Prostate gland (tissue), 2 donors: ENCODE measurements at regions of chr1 and their contacts with region 1.

Region 1: GRCh38 chr1:205354259-205354904 is 2.3 kb downstream of the KLHDC8A start:
- DNase-seq: peak; percentile 60
- H3K4me3 ChIP-seq: no peak overlapping the region
- H3K27ac ChIP-seq: no peak overlapping the region
- H3K4me1 ChIP-seq: no peaks in the 10 kb centered on the region
- H3K27me3 ChIP-seq: no peaks in the 10 kb centered on the region
- CTCF ChIP-seq: peak; percentile 61 to 76 (median 70)
- POLR2A ChIP-seq: no peak

Region 2: DNA sequence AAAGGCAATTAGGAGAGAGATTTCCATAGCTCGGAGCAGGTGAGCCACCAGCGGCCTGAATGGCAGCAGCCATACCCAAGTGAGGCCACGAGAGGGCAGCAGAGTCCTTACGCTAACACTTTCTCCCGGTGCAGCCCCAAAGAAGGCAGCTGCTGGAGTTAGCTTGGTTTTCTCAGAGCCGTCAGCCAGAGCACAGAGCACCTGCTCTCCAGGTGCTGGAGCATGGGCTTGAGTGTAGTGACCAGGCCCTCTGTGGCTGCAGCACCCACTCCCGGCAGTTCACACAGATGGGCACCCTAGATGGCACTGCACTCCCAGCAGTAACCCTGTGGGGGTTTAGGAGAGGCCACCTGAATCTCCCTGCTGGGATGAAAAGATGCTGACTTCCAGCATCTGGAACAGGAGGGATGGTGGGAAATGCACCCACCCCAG is 80.8 kb before region 1 on chr1:
- intact Hi-C with region 1: no loop called
- DNase-seq: peak; percentile 87
- H3K4me3 ChIP-seq: no peak overlapping the region
- H3K27ac ChIP-seq: no peak overlapping the region
- H3K4me1 ChIP-seq: no peaks in the 10 kb centered on the region
- H3K27me3 ChIP-seq: no peaks in the 10 kb centered on the region
- CTCF ChIP-seq: peak; percentile 98 to 99 (median 98)
- POLR2A ChIP-seq: no peak

Region 3: DNA sequence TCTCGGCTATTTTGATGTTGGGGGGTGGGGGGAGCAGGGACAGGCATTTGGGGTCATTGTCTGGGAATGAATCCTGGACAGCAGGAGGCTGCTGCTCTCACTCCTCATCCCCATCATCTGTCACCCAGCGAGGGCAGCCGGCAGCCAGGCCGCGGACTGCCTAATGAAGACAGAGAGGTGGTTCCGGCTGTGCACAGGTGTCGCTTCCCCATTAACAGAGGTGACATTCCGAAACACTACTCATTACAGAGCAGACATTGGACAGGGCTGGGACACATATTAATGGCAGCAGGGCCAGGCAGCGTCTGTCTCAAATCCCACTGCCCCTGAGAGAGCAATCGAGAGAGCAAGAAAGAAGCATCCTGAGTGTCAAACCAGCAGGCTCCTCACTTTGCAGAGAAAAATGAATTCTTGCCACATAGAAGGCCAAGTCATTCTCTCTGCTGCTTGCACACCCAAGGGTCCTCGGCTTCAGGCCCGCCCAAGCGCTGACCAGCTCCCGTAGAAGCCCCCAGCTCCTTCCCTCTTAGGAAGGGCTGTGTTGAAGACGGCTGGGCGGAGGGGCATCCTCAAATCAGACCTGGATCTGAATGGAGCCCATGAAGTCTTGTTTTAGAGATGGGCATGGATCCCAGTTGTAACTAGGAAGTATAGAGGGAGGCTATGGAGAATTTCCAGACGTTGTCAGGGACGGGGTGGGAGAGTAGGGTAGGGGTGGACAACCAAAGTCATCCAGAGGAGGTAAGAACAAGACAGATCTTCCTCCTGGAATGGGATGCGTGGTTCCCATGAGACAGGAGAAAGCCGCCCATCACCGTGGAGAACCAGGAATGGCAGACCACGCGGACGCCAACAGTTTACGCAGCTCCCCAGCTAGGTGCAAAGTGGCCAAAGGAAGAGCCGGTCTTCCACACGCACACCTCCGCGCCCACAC is 75.6 kb after region 1 on chr1:
- intact Hi-C with region 1: loop called (anchors 5 kb)
- DNase-seq: no peak
- H3K4me3 ChIP-seq: peak overlapping the region; percentile 27 to 29
- H3K27ac ChIP-seq: no peak overlapping the region
- H3K4me1 ChIP-seq: no peaks in the 10 kb centered on the region
- H3K27me3 ChIP-seq: no peaks in the 10 kb centered on the region
- CTCF ChIP-seq: no peak
- POLR2A ChIP-seq: no peak

Region 4: GRCh38 chr1:205485338-205486228 is 131.2 kb after region 1 on chr1:
- intact Hi-C with region 1: loop called (anchors 2 kb)
- DNase-seq: peak; percentile 66
- H3K4me3 ChIP-seq: no peak overlapping the region
- H3K27ac ChIP-seq: no peak overlapping the region
- H3K4me1 ChIP-seq: no peaks in the 10 kb centered on the region
- H3K27me3 ChIP-seq: peaks cover 2% of the 10 kb centered on the region
- CTCF ChIP-seq: peak; percentile 88 to 93 (median 90)
- POLR2A ChIP-seq: no peak